ENCODE measurements at regions of chr14 and their contacts with region 1.

Region 1: DNA sequence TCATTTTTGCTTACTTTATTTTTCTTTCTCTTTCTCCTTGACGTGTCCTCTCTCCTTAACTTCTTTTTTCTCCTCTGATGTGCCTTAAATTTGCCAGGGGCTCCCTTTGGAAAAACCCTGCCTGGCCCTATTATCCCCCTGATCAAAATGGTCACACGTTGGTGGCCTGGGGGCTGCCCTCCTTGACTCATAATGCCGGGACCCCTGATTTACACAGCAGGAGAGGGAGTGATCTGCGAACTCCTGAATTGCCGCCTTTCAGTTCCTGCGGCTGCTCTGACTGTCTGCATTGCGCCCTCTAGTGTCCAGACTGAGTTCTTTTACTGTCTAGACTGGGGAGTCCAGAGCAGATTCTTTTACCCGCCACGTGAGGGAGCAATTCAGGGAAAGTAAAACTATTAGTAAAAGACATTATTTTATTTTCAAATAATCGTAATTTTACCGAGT is 44.8 kb upstream of the GZMB start:
- DNase-seq: peak; percentile 77
- CTCF ChIP-seq: peak; percentile 97

Region 2: DNA sequence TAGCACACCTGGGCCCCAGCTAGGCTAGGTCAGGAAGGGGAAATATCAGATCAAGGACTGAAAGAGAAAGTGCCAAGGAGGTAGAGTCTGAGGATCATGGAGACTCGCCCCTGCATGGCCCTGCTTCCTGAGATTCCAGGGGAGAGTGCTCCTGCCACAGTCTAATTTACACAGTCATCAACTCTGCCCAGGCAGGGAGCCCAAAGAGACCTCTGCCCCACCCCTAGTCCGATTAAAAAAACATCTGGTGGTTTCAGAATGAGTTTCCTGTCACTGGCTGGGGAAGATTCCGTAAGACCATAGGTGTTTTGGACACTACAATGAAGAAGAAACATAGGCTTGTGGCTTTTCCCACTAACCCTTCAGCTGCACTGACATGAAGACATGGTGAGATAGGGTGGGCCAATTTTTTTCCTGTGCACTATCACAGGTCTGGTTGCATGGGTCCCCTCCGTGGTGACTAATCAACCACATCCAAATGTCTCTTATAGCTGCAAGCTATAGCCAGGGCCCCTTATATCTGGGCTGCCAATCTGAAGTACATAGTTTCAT is 13.3 kb before region 1 on chr14:
- CTCF ChIA-PET with region 1: interaction called, 26 read pairs
- POLR2A ChIA-PET with region 1: no interaction called
- DNase-seq: peak; percentile 55
- CTCF ChIP-seq: no peak

Region 3: GRCh38 chr14:24690492-24690891 is 11.7 kb after region 1 on chr14:
- CTCF ChIA-PET with region 1: interaction called, 14 read pairs
- POLR2A ChIA-PET with region 1: no interaction called
- DNase-seq: no peak
- CTCF ChIP-seq: no peak

Region 4: GRCh38 chr14:24734878-24735500 is 56.2 kb after region 1 on chr14:
- CTCF ChIA-PET with region 1: no interaction called
- POLR2A ChIA-PET with region 1: no interaction called
- DNase-seq: no peak
- CTCF ChIP-seq: peak; percentile 60

Region 5: GRCh38 chr14:24900269-24901100 is 221.7 kb after region 1 on chr14:
- CTCF ChIA-PET with region 1: no interaction called
- POLR2A ChIA-PET with region 1: no interaction called
- DNase-seq: no peak
- CTCF ChIP-seq: no peak

Measured in GM10248 (cell line).